ENCODE measurements at regions of chr9 and their contacts with region 1.

Region 1: GRCh38 chr9:134365791-134366688 is 39.8 kb downstream of the RXRA start:
- DNase-seq: peak; percentile 33
- ATAC-seq: peak; percentile 69
- H3K4me3 ChIP-seq: no peak overlapping the region
- H3K27ac ChIP-seq: no peak overlapping the region
- H3K4me1 ChIP-seq: no peaks in the 10 kb centered on the region
- H3K27me3 ChIP-seq: no peaks in the 10 kb centered on the region
- CTCF ChIP-seq: no peak

Region 2: DNA sequence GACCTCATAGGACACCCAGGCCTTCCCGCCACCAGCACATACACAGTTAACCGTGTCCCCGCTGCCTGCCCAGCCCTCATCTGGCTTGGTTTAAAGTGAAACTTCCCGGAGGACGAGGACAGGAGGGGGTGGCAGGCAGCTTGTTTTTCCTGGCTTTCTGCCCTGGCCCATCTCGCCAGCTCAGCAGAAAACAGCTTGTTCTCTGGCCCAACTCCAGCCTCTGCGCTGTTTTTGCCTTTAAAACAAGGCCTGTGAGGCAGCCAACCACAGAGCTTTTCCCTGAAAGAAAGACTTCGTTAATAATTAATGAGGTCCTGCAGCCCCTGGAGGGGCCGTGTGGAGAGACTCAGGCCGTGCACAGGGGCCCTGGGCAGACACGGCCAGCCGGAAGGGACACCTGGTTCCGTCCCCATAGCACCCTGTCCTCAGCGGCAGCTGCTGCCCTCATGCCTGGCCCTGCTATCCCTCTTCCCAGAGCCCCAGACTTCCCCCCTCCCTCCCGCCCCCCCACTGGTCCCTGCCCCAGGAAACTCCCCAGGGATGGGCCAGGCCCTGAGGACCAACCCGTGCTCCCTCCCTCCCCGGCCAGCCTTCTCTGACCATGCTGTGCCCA is 69.0 kb after region 1 on chr9:
- CTCF ChIA-PET with region 1: no interaction called
- POLR2A ChIA-PET with region 1: no interaction called
- intact Hi-C with region 1: loop called (anchors 10 kb)
- DNase-seq: peak; percentile 59
- ATAC-seq: peak; percentile 65
- H3K4me3 ChIP-seq: no peak overlapping the region
- H3K27ac ChIP-seq: no peak overlapping the region
- H3K4me1 ChIP-seq: no peaks in the 10 kb centered on the region
- H3K27me3 ChIP-seq: no peaks in the 10 kb centered on the region
- CTCF ChIP-seq: no peak